ENCODE measurements at regions of chr1 and their contacts with region 1.

Region 1: DNA sequence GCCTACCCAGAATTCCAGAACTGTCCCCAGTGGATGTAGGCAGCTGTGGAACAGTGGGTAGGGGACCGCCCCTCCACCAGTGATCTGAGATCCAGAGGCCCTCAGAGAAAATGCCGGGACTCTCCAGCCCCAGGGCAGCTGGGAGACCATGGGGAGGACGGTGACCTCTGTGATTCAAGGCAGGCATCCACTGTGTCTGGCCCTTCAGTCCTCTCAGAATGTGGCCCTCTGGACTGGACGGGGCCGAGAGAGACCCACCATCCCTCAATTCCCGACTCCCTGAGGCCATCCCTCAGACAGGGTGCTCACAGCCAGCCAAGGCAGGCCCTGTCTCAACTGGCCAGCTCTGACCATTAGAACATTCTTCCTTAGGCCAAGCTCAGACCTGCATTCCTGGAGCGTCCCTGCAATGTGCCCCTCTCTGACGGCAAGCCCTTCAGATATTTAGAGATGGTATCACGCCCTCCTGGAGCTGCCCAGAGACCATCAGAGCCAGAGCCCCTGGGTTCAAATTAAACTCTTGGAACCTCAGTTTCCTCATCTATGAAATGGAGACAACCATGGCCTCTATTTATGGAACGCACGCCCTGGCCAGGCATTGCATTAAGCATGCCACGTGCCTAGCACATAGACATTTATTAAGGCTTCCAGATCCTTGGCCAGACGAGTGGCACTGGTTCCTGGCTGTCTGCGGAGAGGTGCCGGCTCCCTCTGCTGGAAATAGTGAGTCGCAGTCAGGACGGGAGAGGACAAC is 9.6 kb upstream of the EPS8L3 start:
- DNase-seq: peak; percentile 51
- ATAC-seq: peak; percentile 85
- H3K4me3 ChIP-seq: no peak overlapping the region
- H3K27ac ChIP-seq: no peak overlapping the region
- H3K4me1 ChIP-seq: peaks cover 26% of the 10 kb centered on the region
- H3K27me3 ChIP-seq: no peaks in the 10 kb centered on the region
- CTCF ChIP-seq: peak; percentile 90

Region 2: DNA sequence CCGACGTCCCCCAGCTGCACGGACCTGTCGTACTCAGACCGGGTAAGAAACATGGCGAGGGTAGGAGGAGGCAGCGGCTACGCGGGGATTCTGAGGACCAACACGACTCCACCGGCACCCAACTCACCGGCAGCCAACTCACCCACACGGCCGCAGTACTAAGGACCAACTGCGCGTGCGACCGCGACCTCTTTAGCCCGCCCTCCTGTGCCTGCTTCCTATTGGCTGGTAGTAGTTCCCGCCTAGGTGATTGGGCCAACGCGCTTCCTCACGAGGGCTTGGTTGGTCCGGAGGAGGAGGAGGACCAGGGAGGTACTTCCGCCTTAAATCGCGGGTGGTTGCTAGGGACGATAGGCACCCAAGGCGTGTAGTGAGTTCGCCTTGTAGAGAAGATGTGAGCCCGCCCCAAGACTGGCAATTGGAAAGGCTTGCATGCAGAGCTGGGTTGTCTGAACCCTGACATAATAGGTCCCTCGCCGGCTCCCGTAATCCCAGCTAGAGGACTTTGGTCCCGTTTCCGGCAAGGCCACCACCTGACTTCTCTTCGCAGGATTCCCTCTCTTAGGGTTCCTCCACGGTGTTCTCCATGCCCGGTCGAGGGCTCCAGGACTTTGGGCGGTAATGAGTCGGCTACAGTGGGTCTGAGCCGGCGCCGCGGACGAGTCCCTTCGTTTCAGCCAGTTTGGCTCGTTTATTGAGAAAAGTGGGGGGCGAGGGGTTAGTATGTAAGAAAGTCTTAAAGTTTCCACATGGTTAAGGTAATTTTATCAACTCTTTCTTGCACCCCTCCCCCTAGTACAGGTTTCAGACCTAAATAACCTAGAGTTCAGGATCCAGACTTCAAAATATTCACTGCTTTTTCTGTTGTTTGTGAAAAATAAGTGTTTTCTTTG is 346.8 kb before region 1 on chr1 and contains the start of gene PSMA5:
- CTCF ChIA-PET with region 1: interaction called, 17 read pairs
- POLR2A ChIA-PET with region 1: no interaction called
- in situ Hi-C with region 1: no loop called
- intact Hi-C with region 1: no loop called
- DNase-seq: peak; percentile 89
- ATAC-seq: peak; percentile 98
- H3K4me3 ChIP-seq: peak within 1 kb of the TSS; percentile 93 to 95
- H3K27ac ChIP-seq: peak within 1 kb of the TSS; percentile 96
- H3K4me1 ChIP-seq: peaks cover 10% of the 10 kb centered on the region
- H3K27me3 ChIP-seq: no peaks in the 10 kb centered on the region
- CTCF ChIP-seq: no peak
- total RNA-seq, gene PSMA5: 118 TPM

Region 3: GRCh38 chr1:109548321-109549267 is 224.7 kb before region 1 on chr1 and contains the start of gene GNAI3:
- CTCF ChIA-PET with region 1: interaction called, 4 read pairs
- POLR2A ChIA-PET with region 1: no interaction called
- in situ Hi-C with region 1: no loop called
- intact Hi-C with region 1: loop called (anchors 5 kb)
- DNase-seq: peak; percentile 77
- ATAC-seq: peak; percentile 95
- H3K4me3 ChIP-seq: peak within 1 kb of the TSS; percentile 65 to 94
- H3K27ac ChIP-seq: peak within 1 kb of the TSS; percentile 98
- H3K4me1 ChIP-seq: peaks cover 9% of the 10 kb centered on the region; the same call in 1 of the 2 replicates
- H3K27me3 ChIP-seq: no peaks in the 10 kb centered on the region
- CTCF ChIP-seq: no peak
- total RNA-seq, gene GNAI3: 6.4 TPM

Region 4: GRCh38 chr1:109643385-109644230 is 129.7 kb before region 1 on chr1:
- CTCF ChIA-PET with region 1: interaction called, 17 read pairs
- POLR2A ChIA-PET with region 1: no interaction called
- in situ Hi-C with region 1: no loop called
- intact Hi-C with region 1: loop called (anchors 2 kb)
- DNase-seq: no peak
- ATAC-seq: peak; percentile 94
- H3K4me3 ChIP-seq: peak overlapping the region in 1 of 2 experiments; percentile 8; a peak in 1 of 4 replicates
- H3K27ac ChIP-seq: peak overlapping the region; percentile 41
- H3K4me1 ChIP-seq: peaks cover 8% of the 10 kb centered on the region; the same call in 1 of the 2 replicates
- H3K27me3 ChIP-seq: no peaks in the 10 kb centered on the region
- CTCF ChIP-seq: peak; percentile 90

Region 5: GRCh38 chr1:109910123-109910962 is 137.0 kb after region 1 on chr1 and contains the start of gene CSF1:
- CTCF ChIA-PET with region 1: no interaction called
- POLR2A ChIA-PET with region 1: no interaction called
- in situ Hi-C with region 1: no loop called
- intact Hi-C with region 1: loop called (anchors 5 kb)
- DNase-seq: no peak
- ATAC-seq: peak; percentile 72
- H3K4me3 ChIP-seq: peak within 1 kb of the TSS; percentile 70 to 83
- H3K27ac ChIP-seq: peak within 1 kb of the TSS; percentile 97
- H3K4me1 ChIP-seq: peaks cover 33% of the 10 kb centered on the region
- H3K27me3 ChIP-seq: no peaks in the 10 kb centered on the region
- CTCF ChIP-seq: no peak
- total RNA-seq, gene CSF1: 217 TPM

Measured in Panc1 (cell line).